ENCODE measurements at regions of chr2 and their contacts with region 1.

Region 1: DNA sequence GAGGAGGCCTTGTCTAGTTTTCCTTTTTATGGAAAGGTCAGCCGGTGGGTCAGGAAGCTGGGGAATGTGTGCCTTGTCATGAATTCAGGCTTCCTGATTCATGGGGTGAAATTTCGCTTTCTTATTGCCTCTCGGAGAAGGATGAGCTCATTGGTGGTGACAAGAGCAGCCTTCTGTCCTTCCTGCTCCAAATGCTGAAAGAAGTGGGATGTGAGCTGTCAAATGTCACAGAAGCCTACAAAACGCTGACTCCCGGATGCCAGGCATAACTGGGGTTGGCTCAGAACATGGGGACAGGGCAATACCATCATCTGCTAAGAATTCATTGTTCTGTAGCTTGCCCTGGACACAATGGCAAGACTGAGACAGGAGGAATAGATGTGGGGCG is 55.8 kb upstream of the FAM136A start:
- DNase-seq: no peak
- H3K4me3 ChIP-seq: no peak overlapping the region
- H3K27ac ChIP-seq: peak overlapping the region; percentile 81
- H3K4me1 ChIP-seq: peaks cover 38% of the 10 kb centered on the region
- H3K27me3 ChIP-seq: no peaks in the 10 kb centered on the region
- CTCF ChIP-seq: no peak
- POLR2A ChIP-seq: no peak

Region 2: DNA sequence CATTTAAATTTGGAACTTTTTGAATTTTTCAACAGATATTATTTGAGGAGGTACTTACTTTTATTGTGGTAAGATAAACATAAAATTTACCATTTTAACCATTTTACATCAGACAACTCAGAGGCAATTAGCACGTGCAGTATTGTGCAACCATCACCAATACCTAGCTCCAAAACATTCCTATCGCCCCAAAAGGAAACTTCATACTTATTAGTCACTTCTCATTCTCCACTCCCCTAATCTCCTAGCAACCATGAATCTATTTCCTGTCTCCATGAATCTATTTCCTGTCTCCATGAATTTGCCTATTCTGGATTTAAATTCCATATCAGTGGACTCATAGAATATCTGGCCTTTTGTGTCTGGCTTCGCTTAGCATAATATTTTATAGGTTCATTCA is 14.1 kb after region 1 on chr2:
- CTCF ChIA-PET with region 1: interaction called, 5 read pairs
- POLR2A ChIA-PET with region 1: no interaction called
- dilution Hi-C with region 1: no loop called
- intact Hi-C with region 1: loop called (anchors 1 kb)
- DNase-seq: peak; percentile 83
- H3K4me3 ChIP-seq: no peak overlapping the region
- H3K27ac ChIP-seq: peak overlapping the region; percentile 97
- H3K4me1 ChIP-seq: peaks cover 16% of the 10 kb centered on the region
- H3K27me3 ChIP-seq: no peaks in the 10 kb centered on the region
- CTCF ChIP-seq: no peak
- POLR2A ChIP-seq: peak; percentile 23

Region 3: GRCh38 chr2:70456585-70457495 is 99.2 kb after region 1 on chr2:
- CTCF ChIA-PET with region 1: no interaction called
- POLR2A ChIA-PET with region 1: no interaction called
- dilution Hi-C with region 1: no loop called
- intact Hi-C with region 1: no loop called
- DNase-seq: no peak
- H3K4me3 ChIP-seq: no peak overlapping the region
- H3K27ac ChIP-seq: no peak overlapping the region
- H3K4me1 ChIP-seq: no peaks in the 10 kb centered on the region
- H3K27me3 ChIP-seq: peaks cover 0 to 2% of the 10 kb centered on the region in 2 experiments
- CTCF ChIP-seq: no peak
- POLR2A ChIP-seq: no peak

Region 4: DNA sequence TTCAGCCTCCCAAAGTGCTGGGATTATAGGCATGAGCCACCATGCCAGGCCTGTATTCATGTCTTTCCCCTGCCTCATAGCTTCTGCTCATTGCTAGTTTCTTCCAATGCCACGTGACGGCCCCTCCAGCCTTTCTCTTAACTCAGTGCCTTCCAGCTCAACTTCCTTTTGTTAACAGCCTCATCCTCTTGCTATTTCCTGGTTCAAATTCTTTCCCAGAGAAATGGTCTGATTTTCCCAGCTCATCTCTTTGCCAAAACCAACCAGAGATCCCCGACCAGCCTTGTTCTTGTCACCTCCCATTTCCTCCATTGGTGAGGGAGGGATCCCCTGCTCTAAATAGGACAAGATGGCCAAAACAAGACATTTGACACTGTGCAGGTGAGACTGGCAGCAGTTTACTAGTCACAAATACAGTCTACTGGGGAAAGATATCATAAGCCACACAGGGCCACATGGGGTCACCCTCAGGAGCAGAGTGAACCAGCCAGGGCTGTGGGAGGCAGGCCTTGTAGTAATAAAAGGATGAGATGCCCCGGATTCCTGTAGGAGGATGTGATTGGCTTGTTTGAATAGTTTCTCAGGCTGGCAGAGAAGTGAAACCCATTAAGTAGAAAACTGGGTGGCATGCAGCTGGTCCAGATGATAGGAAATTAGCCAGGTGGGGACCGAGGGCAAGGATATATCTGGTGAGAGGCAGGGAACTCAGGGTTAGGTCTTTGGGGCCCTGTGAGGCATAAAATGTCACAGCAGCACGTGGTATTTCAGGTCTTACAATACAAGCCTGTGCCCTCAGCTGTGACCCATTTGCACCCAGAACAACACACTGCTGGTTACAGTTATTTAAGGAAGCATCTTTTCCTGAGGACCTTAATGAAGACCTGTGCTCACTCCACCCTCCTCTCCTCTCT is 471.5 kb after region 1 on chr2:
- CTCF ChIA-PET with region 1: no interaction called
- POLR2A ChIA-PET with region 1: no interaction called
- dilution Hi-C with region 1: no loop called
- intact Hi-C with region 1: loop called (anchors 2 kb)
- DNase-seq: peak; percentile 91
- H3K4me3 ChIP-seq: no peak overlapping the region
- H3K27ac ChIP-seq: peak overlapping the region; percentile 87
- H3K4me1 ChIP-seq: peaks cover 20% of the 10 kb centered on the region
- H3K27me3 ChIP-seq: no peaks in the 10 kb centered on the region
- CTCF ChIP-seq: no peak
- POLR2A ChIP-seq: no peak

Measured in endothelial cell of umbilical vein (primary cell).